HepG2 (cell line): ENCODE measurements at regions of chr1 and their contacts with region 1.

Region 1: GRCh38 chr1:248858891-248859889 is at the start of gene ZNF692:
- DNase-seq: peak; percentile 93
- ATAC-seq: peak; percentile 77
- H3K4me3 ChIP-seq: peak within 1 kb of the TSS; percentile 62 to 87 (median 83)
- H3K27ac ChIP-seq: peak within 1 kb of the TSS; percentile 79
- H3K4me1 ChIP-seq: peaks cover 51% of the 10 kb centered on the region
- H3K27me3 ChIP-seq: no peaks in the 10 kb centered on the region; a peak in 1 of 5 replicates
- CTCF ChIP-seq: no peak
- EP300 ChIP-seq: no peak
- POLR2A ChIP-seq: no peak; a peak in 1 of 4 replicates
- RAD21 ChIP-seq: no peak
- total RNA-seq, gene ZNF692: 6.2 and 27.3 TPM in 2 replicates

Region 2: GRCh38 chr1:248065071-248065470 is 794.1 kb before region 1 on chr1:
- CTCF ChIA-PET with region 1: no interaction called
- POLR2A ChIA-PET with region 1: no interaction called
- in situ Hi-C with region 1: no loop called
- intact Hi-C with region 1: no loop called
- DNase-seq: no peak
- ATAC-seq: no peak
- H3K4me3 ChIP-seq: no peak overlapping the region
- H3K27ac ChIP-seq: no peak overlapping the region
- H3K4me1 ChIP-seq: no peaks in the 10 kb centered on the region
- H3K27me3 ChIP-seq: no peaks in the 10 kb centered on the region
- CTCF ChIP-seq: no peak
- EP300 ChIP-seq: no peak
- POLR2A ChIP-seq: no peak
- RAD21 ChIP-seq: no peak

Region 3: DNA sequence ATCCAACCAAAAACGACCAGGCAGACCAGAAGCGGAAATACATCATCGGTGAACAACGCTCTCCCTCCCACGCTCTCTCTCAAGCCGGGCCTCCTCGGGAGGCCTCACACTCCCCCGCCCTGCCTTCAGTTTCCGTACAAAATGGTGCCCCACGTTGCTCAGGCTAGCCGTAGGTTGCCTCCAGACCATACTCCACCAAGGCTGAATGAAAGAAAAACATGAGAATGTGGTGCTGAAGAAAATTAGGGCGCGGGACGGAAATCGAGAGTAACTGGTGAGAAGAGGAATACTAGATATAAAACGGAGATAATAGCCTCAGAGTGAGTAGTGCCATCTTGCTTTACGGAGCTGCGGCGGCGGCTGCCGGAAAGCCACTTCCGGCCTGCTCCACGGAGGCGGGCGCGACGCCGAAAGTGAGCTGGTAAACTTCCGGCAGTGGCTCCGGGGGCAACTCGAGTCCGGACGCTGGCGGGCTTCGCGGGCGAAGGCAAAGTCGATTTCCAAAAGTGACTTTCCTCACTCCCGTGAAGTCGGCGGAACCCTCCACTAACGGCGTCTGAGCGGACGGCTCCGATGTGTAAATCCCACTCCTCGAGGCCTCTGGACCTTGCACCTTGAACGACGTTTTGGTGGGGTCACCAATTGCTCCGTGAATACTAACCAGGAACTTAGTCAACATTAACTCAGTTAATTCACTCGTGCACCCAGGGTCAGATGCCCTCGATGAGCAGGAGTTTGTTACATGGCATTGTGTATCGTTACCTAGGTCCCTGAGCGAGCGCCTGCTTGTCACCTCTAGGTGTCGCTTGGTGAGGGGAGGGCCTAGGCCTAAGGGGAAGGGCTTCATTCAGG is 33.1 kb before region 1 on chr1 and contains the start of gene SH3BP5L:
- CTCF ChIA-PET with region 1: no interaction called
- POLR2A ChIA-PET with region 1: interaction called, 43 read pairs
- in situ Hi-C with region 1: no loop called
- intact Hi-C with region 1: no loop called
- DNase-seq: peak; percentile 93
- ATAC-seq: peak; percentile 94
- H3K4me3 ChIP-seq: peak within 1 kb of the TSS; percentile 71 to 92 (median 81)
- H3K27ac ChIP-seq: peak within 1 kb of the TSS; percentile 99
- H3K4me1 ChIP-seq: peaks cover 69% of the 10 kb centered on the region
- H3K27me3 ChIP-seq: no peaks in the 10 kb centered on the region; a peak in 1 of 5 replicates
- CTCF ChIP-seq: peak; percentile 88
- EP300 ChIP-seq: peak in 1 of 2 experiments; percentile 5; a peak in 2 of 4 replicates
- POLR2A ChIP-seq: peak; percentile 79 to 90
- RAD21 ChIP-seq: 0 out of 2 replicates have a peak, but pooled peaks have one; percentile 28
- total RNA-seq, gene SH3BP5L: 10.2 and 14.9 TPM in 2 replicates

Region 4: DNA sequence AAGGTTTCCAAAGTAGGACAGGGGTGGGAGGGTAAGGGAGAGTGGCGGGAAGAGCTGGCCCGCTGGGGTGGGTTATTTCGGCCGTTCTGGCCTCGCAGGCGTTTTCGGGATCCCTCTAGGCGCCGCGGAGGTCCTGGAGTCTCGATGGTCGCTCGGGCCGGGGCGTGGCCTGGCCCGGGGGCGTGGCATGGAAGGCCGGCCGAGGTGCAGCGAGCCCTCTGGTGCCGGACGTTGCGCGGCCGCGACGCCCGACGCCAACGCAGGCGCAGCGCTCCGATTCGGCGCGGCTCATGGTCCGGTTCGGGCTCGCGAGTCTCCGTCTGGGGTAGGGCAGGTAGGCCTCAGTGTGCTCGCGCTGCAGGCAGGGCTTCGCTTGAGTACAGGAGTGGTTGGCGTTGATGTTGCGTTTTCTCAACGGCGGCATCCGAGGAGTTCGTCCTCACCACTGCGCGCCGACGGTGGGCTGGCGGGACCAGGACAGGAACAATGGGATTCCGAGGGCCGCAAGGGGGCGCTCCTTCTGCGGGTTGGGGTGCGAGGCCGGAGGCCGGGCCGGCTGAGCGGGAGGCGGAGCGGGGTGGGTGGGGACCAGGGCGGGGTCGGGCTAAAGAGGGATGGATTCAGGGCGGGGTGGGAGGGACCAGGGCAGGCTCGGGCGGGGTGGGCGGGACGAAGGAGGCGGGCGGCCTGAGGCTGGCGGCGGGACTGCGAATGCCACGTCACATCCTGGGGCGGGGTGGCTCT is 47.0 kb after region 1 on chr1 and contains the start of gene PGBD2:
- CTCF ChIA-PET with region 1: no interaction called
- POLR2A ChIA-PET with region 1: interaction called, 3 read pairs
- in situ Hi-C with region 1: no loop called
- intact Hi-C with region 1: loop called (anchors 2 kb)
- DNase-seq: peak; percentile 81
- ATAC-seq: peak; percentile 97
- H3K4me3 ChIP-seq: peak within 1 kb of the TSS; percentile 84 to 90 (median 89)
- H3K27ac ChIP-seq: peak within 1 kb of the TSS; percentile 97
- H3K4me1 ChIP-seq: peaks cover 25% of the 10 kb centered on the region
- H3K27me3 ChIP-seq: no peaks in the 10 kb centered on the region; a peak in 1 of 5 replicates
- CTCF ChIP-seq: peak; percentile 89
- EP300 ChIP-seq: no peak; a peak in 1 of 4 replicates
- POLR2A ChIP-seq: peak; percentile 95 to 97
- RAD21 ChIP-seq: peak; percentile 78
- total RNA-seq, gene PGBD2: 7.4 and 7.9 TPM in 2 replicates